ENCODE measurements at regions of chr13 and their contacts with region 1.

Region 1: GRCh38 chr13:41652727-41653361 is 195.5 kb downstream of the RGCC start:
- DNase-seq: peak; percentile 45 to 54 (median 50)
- H3K4me3 ChIP-seq: no peak overlapping the region
- H3K4me3 Mint-ChIP-seq: no peak overlapping the region
- H3K27ac ChIP-seq: no peak overlapping the region
- H3K27ac Mint-ChIP-seq: peak overlapping the region in 3 of 7 donors; percentile 19 to 86 (median 43)
- H3K4me1 ChIP-seq: no peaks in the 10 kb centered on the region
- H3K4me1 Mint-ChIP-seq: peaks cover 4 to 9% (median 7%) of the 10 kb centered on the region in 4 donors
- H3K27me3 ChIP-seq: no peaks in the 10 kb centered on the region
- H3K27me3 Mint-ChIP-seq: no peaks in the 10 kb centered on the region

Region 2: GRCh38 chr13:41384755-41385503 is 267.9 kb before region 1 on chr13:
- CTCF ChIA-PET with region 1: interaction called, 22 read pairs
- POLR2A ChIA-PET with region 1: interaction called, 3 read pairs
- intact Hi-C with region 1: loop called (anchors 1 kb)
- DNase-seq: no peak
- H3K4me3 ChIP-seq: no peak overlapping the region
- H3K4me3 Mint-ChIP-seq: no peak overlapping the region
- H3K27ac ChIP-seq: no peak overlapping the region
- H3K27ac Mint-ChIP-seq: peak overlapping the region in 2 of 7 donors; percentile 3 to 28
- H3K4me1 ChIP-seq: no peaks in the 10 kb centered on the region
- H3K4me1 Mint-ChIP-seq: peaks cover 13 to 36% (median 21%) of the 10 kb centered on the region in 4 donors
- H3K27me3 ChIP-seq: no peaks in the 10 kb centered on the region
- H3K27me3 Mint-ChIP-seq: peaks cover 0 to 1% of the 10 kb centered on the region in 2 donors

Region 3: DNA sequence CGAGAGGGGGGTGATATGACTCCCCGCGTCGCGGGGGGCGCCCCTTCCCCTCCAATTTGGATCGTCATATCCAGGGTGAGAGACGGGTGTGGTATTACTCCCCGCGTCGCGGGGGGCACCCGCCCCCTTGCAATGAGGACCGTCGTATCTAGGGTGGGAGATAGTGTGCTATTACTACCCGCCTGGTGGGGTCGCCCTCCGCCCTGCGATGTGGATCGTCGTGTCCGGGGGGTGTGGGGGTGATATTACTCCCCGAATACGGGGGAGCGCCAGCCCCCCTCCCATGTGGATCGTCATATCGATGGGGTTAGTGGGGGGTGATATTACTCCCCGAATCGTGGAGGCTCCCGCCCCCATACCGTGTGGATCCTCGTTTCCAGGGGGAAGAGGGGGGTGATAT is 224.7 kb before region 1 on chr13:
- CTCF ChIA-PET with region 1: interaction called, 13 read pairs
- POLR2A ChIA-PET with region 1: no interaction called
- intact Hi-C with region 1: loop called (anchors 1 kb)
- DNase-seq: peak; percentile 25 to 42 (median 35)
- H3K4me3 ChIP-seq: no peak overlapping the region
- H3K4me3 Mint-ChIP-seq: peak overlapping the region in 6 of 8 donors; percentile 24 to 89 (median 72)
- H3K27ac ChIP-seq: no peak overlapping the region
- H3K27ac Mint-ChIP-seq: peak overlapping the region in 1 of 7 donors; percentile 29
- H3K4me1 ChIP-seq: peaks cover 13% of the 10 kb centered on the region
- H3K4me1 Mint-ChIP-seq: peaks cover 5 to 17% (median 8%) of the 10 kb centered on the region in 4 donors
- H3K27me3 ChIP-seq: no peaks in the 10 kb centered on the region
- H3K27me3 Mint-ChIP-seq: peaks cover 2 to 4% of the 10 kb centered on the region in 2 donors

Region 4: DNA sequence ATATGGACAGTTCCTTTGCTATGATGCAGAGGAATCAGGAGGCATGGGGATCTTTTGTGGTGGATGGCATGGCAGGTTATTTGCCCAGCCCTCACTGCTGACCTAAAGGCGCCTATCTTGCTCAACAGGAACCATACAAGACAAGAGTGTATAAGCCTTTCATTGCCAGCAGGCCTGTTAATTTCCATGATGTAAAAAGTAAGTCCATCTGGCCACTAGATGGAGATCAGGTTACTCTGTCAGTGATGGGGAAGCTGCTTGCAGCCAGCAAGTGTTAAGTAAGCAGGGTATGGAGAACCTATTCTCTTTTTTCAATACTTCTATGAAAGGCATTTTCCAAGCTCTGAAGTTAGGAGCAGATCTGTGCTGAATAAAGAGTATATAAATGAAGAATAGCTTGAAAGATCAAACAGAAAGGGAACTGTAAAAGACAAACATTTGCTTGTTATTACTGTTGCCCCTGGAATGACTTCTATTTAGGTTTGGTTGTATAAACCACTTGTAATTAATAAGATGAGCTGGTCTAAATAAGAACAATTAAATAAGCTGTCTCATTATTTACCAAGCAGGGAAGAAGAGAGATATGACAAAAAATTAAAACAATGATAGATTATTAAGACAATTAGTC is 15.4 kb after region 1 on chr13:
- CTCF ChIA-PET with region 1: interaction called, 23 read pairs
- POLR2A ChIA-PET with region 1: no interaction called
- intact Hi-C with region 1: no loop called
- DNase-seq: peak; percentile 34 to 56 (median 43)
- H3K4me3 ChIP-seq: no peak overlapping the region
- H3K4me3 Mint-ChIP-seq: no peak overlapping the region
- H3K27ac ChIP-seq: no peak overlapping the region
- H3K27ac Mint-ChIP-seq: peak overlapping the region in 1 of 7 donors; percentile 9
- H3K4me1 ChIP-seq: no peaks in the 10 kb centered on the region
- H3K4me1 Mint-ChIP-seq: no peaks in the 10 kb centered on the region
- H3K27me3 ChIP-seq: no peaks in the 10 kb centered on the region
- H3K27me3 Mint-ChIP-seq: no peaks in the 10 kb centered on the region